GM10248 (cell line): ENCODE measurements at regions of chr20 and their contacts with region 1.

Region 1: DNA sequence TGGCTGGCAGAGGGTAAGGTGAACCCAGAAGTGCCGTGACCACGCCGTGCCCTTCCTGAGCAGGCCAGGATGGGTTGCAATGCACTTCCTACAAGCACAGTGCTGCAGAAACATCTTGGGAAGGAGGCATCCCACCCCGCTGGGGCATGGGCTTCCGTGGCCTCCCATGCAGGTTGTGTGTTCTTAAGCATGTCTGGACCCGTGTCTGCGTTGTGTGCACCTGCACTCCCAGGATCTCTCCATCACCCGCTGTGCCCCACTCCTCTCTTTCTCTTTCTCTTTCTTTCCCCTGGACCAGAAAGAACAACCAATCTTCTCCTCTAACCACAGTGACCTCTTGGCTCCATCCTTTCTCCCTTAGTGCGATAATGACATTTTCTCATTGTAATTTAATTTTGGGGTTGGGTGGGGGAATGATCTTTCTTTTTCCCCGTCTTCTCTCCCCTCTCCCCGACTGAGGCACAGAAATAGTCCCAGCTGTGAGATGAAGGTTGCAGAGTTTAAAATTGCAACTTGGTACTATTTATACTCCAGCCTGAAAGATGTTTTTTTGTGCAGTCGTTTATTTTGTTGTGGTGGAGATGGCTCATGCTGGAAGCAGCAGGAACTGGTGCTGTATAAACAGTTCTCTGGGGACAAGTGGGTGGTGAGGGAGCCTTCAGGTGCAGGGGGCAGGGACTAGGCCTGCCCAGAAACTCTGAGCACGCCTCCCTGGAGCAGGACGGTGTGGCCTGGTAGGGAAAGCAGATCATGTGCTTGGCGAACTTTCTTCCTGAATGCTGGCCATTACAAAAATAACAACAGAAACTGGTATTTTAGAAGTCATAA is 20.5 kb downstream of the BCAS4 start:
- DNase-seq: peak; percentile 44
- CTCF ChIP-seq: no peak

Region 2: GRCh38 chr20:50690634-50691572 is 124.5 kb before region 1 on chr20 and contains the start of gene RIPOR3:
- CTCF ChIA-PET with region 1: no interaction called
- POLR2A ChIA-PET with region 1: no interaction called
- DNase-seq: no peak
- CTCF ChIP-seq: no peak

Region 3: DNA sequence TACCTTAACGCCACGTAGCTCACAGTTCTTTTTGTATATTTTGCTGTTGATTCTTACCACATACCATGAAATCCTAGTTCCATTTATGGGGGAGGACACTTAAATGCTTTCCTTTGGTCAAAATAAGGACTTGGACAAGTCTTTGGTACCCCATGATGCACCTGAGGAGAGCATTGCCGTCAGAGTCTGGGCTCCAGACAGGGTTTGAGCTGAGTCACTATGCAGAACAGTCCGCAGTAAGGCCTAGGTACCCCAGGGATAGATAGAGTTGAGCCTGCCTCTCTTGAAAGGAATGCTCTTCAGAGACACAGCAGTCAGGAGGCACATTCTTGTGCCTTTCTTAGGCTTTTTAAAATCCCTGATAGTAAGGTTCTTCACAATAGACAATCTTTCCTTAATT is 78.0 kb before region 1 on chr20:
- CTCF ChIA-PET with region 1: no interaction called
- POLR2A ChIA-PET with region 1: no interaction called
- DNase-seq: no peak
- CTCF ChIP-seq: no peak

Region 4: DNA sequence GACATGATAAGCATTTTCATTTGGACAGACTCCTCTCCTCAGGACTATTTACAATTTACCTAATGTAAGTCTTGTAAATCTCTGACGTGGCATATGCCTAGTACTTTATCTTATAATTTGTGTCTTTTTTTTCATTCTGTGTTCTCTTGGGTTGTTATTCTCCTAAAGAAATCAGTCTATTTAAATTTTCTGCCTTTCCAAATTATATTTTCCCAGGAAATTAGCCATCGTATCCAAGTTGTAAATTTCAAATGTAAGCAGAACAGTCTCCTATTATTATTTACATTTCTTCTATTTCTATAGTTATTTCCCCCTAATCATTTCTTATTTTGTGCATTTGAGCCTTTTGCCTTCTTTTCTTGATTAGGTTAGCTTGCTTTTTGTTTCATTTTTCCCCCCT is 38.0 kb before region 1 on chr20:
- CTCF ChIA-PET with region 1: no interaction called
- POLR2A ChIA-PET with region 1: no interaction called
- DNase-seq: no peak
- CTCF ChIP-seq: no peak

Region 5: DNA sequence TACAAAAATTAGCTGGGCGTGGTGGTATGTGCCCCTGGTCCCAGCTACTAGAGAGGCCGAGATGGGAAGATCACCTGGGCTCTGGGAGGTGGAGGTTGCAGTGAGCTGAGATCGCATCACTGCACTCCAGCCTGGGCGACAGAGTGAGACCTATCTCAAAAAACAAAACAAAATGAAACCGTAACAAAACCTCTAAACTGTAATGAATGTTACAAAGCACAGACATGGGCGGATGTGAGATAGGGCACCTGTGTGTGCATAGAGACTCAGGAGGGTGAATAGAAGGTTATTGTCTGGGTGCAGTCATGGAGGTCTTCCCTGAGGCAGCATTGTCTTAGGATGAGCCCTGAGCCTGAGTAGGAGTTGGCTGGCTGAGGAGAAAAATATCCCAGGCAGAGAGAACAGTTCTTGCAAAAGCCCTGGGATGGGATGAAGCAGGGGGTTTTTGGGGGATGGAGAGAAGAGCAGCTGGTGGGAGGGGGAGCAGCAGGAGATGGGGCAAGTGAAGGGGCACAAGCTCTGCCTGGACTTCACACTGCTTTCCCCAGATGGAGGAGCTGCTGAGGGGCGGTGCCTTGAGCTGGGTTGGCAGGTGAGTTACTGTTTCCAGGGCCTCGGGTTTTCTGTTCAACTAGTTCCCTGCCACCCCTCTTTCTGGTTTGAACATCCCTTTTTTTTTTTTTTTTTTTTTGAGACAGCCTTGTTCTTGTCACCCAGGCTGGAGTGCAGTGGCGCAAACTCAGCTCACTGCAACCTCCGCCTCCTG is 15.3 kb before region 1 on chr20:
- CTCF ChIA-PET with region 1: interaction called, 33 read pairs
- POLR2A ChIA-PET with region 1: no interaction called
- DNase-seq: peak; percentile 71
- CTCF ChIP-seq: no peak

Region 6: DNA sequence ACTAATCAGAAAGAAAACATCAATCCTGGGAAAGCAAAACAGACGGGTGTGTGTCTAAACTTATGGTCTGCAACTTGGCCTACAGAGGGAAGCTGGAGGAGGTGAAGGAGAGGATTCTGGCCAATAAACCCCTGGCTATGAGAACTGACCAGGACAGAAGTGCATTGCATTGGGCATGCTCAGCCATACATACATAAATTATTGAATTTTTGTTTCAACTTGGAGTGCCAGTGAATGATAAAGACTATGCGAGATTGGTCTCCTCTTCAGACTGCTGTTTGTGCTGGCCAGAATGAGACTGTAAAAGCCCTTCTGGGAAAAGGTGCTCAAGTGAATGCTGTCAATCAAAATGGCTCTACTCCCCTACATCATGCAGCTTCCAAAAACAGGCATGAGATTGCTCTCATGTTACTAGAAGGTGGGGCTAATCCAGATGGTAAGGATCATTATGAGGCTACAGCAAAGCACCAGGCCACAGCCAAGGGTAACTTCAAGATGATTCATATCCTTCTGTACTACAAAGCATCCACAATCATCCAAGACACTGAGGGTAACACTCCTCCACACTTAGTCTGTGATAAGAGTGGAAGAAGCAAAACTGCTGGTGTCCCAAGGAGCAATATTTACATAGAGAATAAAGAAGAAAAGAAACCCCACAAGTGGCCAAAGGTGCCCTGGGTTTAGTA is 98.5 kb after region 1 on chr20:
- CTCF ChIA-PET with region 1: no interaction called
- POLR2A ChIA-PET with region 1: interaction called, 12 read pairs
- DNase-seq: no peak
- CTCF ChIP-seq: no peak